ENCODE measurements at regions of chr2 and their contacts with region 1.

Region 1: GRCh38 chr2:236180831-236181453 is 12.8 kb upstream of the GBX2 start:
- DNase-seq: no peak
- H3K4me3 ChIP-seq: no peak overlapping the region
- H3K27ac ChIP-seq: no peak overlapping the region
- H3K4me1 ChIP-seq: peaks cover 14 to 25% (median 20%) of the 10 kb centered on the region in 3 donors
- H3K27me3 ChIP-seq: peaks cover 12 to 90% (median 26%) of the 10 kb centered on the region in 4 donors
- CTCF ChIP-seq: peak in 5 of 6 experiments; percentile 44 to 74 (median 64)
- POLR2A ChIP-seq: no peak

Region 2: GRCh38 chr2:235779444-235779896 is 401.5 kb before region 1 on chr2:
- intact Hi-C with region 1: loop called (anchors 5 kb)
- DNase-seq: no peak
- H3K4me3 ChIP-seq: no peak overlapping the region
- H3K27ac ChIP-seq: no peak overlapping the region
- H3K4me1 ChIP-seq: no peaks in the 10 kb centered on the region
- H3K27me3 ChIP-seq: no peaks in the 10 kb centered on the region
- CTCF ChIP-seq: peak; percentile 40 to 83 (median 75)
- POLR2A ChIP-seq: no peak

Region 3: DNA sequence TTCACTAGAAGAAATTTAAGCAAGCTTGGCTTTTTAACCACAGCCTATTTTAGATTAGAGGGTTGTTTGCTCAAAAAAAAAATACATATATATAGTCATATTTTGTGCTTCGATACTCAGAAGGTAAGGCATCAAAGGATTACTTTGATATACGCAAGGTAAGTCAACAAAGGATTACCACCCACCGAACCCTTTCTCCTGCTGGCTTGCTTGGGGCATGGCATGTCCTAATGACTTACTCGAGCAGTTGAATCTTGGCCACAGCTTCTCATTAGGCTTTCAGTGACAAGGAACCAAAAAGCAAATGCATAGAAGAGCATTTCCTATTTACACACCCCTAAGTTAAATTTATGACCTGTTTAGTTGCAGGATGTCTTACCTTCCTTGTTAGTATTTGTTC is 391.4 kb before region 1 on chr2:
- intact Hi-C with region 1: no loop called
- DNase-seq: no peak
- H3K4me3 ChIP-seq: no peak overlapping the region
- H3K27ac ChIP-seq: no peak overlapping the region
- H3K4me1 ChIP-seq: no peaks in the 10 kb centered on the region
- H3K27me3 ChIP-seq: no peaks in the 10 kb centered on the region
- CTCF ChIP-seq: no peak
- POLR2A ChIP-seq: no peak

Measured in esophagus squamous epithelium (tissue), 5 donors.